Sciatic nerve (tissue), 2 donors: ENCODE measurements at regions of chr6 and their contacts with region 1.

Region 1: GRCh38 chr6:131023834-131024504 is 39.1 kb downstream of the EPB41L2 start:
- DNase-seq: no peak
- ATAC-seq: no peak

Region 2: GRCh38 chr6:130973521-130974277 is 50.3 kb before region 1 on chr6:
- intact Hi-C with region 1: loop called (anchors 2 kb)
- DNase-seq: no peak
- ATAC-seq: no peak

Region 3: DNA sequence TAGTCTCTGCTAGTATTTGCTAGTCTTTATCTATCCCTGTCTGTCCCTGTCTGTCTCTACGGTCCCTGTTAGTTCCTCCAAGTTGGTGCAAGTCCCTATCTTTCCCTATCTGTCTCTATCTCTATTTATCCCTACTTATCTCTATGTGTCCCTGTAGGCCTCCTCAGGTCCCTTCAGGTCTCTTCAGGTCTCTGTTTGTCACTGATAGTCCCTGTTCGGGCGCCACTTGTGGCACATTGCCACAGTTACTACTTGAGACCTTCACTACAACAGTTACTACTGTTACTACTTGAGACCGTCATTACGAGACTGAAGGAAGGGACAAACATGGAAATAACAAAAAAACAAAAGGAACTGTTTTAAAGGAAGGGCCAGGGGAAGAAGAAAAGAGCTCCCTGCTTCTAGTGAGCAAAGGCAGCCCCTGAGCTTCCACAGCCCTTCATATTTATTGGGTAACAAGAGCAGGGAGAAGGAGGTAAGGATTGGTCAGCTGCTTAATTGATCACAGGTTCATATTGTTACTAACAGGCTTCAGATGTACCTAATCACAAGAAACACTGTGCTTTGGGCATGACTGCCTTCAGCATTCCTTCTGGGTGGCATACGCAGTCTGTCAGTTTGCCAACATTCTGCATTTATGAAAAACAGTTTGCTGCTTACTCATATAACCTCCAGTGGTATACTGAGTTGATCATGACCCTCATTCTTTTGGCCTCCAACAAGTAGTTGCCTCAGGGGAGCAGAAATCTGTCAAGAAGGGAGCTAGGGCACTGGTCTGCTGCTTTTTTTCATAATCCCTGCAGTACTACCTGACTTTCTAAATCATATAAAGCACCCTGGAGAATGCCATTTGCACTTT is 30.7 kb after region 1 on chr6:
- intact Hi-C with region 1: loop called (anchors 2 kb)
- DNase-seq: no peak
- ATAC-seq: no peak